Common myeloid progenitor, CD34-positive (primary cell): ENCODE measurements at regions of chr20 and their contacts with region 1.

Region 1: DNA sequence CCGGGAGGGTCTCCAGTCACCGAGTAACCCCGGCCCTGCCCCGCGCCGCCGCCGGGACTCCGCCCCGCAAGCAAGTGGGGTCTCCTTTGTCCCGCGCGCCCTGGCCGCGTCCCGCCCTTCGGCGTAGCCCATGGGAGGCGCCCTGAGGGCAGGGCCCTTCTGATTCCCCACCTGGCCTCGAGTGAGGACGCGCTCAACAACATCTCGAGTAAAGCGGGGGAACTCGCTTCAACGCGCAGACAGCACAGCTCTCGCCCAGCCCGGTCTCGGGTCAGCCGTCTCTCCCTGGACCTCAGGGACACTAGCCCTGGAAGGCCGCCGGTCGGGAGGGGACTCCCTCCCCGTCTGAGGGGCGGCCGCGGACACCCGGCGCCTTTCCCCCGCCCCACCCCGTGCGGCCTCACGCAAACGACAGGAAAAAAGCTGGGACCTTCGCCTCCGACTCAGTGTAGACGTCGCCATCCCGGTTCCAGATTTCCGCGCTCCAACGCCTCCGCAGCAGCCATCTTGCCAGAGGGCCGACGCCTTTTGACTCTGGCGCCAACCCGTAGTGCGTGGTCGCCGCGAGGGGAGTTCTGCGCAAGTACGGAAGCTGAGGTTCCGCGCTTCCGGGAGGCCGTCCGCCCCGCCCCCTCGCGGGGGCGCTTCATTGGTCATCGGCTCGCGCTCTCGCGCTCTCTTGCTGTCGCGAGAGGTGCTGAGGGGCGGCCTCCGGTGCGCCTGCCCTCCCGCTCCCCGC is 412 bp upstream of the GID8 start:
- DNase-seq: peak; percentile 96 to 98 (median 98)
- H3K4me3 ChIP-seq: peak overlapping the region; percentile 83 to 98 (median 91)
- H3K27ac ChIP-seq: peak overlapping the region; percentile 75 to 89
- H3K4me1 ChIP-seq: peaks cover 5 to 48% (median 25%) of the 10 kb centered on the region in 4 experiments
- H3K27me3 ChIP-seq: no peaks in the 10 kb centered on the region

Region 2: DNA sequence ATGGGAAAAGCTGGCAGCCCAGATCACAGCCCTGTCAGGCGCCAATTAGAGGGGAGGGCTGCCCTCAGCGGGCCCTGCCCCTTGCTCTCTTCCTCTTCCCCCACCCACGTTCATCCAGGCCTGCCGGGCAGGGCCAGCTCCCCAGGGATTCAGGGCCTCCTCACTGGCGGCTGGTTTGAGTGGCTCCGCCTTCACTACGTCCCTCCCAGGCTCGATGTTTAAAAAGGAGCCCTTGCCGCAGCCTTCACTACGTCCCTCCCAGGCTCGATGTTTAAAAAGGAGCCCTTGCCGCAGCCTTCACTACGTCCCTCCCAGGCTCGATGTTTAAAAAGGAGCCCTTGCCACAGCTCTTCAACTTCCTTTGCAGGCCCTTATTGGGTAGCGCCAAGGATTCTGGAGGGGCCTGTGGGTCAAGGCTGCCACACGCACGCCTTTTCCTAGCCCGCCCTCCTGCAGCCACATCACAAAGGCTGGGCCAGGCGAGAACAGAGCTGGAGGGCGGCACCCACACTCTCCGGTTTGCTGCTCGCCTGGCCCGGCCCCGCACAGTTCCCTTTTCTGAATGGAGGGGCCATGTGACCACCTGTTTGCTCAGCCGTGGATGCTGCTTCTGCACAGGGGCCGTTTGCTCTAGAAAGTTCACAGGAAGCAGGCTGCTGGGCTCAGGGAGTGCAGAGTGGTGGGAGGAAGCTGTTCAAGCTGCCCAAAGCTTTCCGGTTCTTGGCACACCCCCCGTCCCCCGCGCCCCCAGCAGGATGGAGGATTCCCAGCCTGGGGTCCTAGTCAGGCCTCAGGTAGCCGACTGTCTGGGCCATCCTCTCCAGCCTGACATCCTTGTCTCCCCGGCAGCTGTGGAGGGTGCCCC is 16.5 kb after region 1 on chr20:
- CTCF ChIA-PET with region 1: interaction called, 10 read pairs
- POLR2A ChIA-PET with region 1: interaction called, 6 read pairs
- DNase-seq: peak; percentile 93 to 99 (median 98)
- H3K4me3 ChIP-seq: peak overlapping the region; percentile 11 to 90 (median 67)
- H3K27ac ChIP-seq: peak overlapping the region; percentile 76 to 83
- H3K4me1 ChIP-seq: peaks cover 2 to 77% (median 71%) of the 10 kb centered on the region in 4 experiments
- H3K27me3 ChIP-seq: no peaks in the 10 kb centered on the region